SK-N-SH (cell line): ENCODE measurements at regions of chr5 and their contacts with region 1.

Region 1: DNA sequence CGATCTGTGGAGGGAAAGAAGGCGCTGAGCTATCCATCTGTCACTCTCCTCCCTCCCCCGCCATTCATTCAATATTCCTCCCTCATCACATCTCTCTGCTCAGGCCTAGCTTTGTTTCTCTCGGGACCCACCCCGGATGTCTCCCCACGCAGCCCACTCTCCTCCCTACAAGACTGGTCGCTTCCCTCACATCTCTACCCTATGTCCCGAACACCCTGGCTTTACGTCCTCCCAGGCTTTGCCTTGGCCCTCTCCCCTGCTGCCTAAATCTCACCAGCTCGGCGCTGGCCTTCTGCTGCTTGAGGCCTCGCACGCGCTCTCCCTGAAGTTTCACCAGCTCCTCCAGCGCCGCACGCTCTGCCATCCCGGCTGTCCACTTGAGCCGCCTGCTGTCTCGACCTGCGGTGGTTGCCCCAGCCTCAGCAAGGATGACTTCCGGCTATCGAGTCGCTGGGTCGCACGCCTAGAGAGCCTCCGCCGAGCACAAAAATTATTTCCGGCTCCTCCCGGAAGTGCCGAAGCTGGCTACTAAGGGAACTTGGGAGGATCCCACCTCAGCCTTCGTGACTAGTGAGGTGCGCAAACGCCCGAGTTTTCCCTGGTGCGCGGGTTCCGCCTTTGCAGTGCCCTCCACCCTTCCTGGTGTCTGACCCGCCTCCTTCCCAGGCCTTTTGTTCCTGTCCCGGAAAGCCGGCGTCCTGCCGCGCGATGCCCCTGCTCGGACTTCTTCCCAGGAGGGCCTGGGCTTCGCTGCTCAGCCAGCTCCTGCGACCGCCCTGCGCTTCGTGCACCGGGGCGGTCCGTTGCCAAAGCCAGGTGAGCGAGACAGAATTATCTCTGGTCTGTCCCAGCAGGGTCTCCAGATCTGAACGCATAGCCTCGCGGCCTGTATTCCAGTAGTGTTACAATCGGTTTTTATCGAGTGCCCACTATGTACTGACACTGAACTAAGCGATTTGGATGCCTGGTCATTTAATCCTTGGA is at the starts of genes HARS1 and HARS2:
- DNase-seq: peak; percentile 92
- H3K4me3 ChIP-seq: peak within 1 kb of the TSS; percentile 87
- H3K27ac ChIP-seq: peak within 1 kb of the TSS; percentile 86 to 88
- H3K4me1 ChIP-seq: peaks cover 0 to 12% of the 10 kb centered on the region in 2 experiments; a peak in 3 of 4 replicates
- H3K27me3 ChIP-seq: no peaks in the 10 kb centered on the region
- CTCF ChIP-seq: no peak
- EP300 ChIP-seq: peak in 1 of 2 experiments; percentile 22; a peak in 1 of 4 replicates
- RAD21 ChIP-seq: no peak
- polyA plus RNA-seq, gene HARS1: 124 and 135 TPM in 2 replicates
- polyA plus RNA-seq, gene HARS2: 40.8 and 54.5 TPM in 2 replicates

Region 2: GRCh38 chr5:140401362-140402257 is 289.6 kb before region 1 on chr5 and contains the start of gene ANKHD1:
- CTCF ChIA-PET with region 1: no interaction called
- POLR2A ChIA-PET with region 1: no interaction called
- DNase-seq: peak; percentile 91
- H3K4me3 ChIP-seq: peak within 1 kb of the TSS; percentile 85 to 98
- H3K27ac ChIP-seq: peak within 1 kb of the TSS; percentile 88 to 95
- H3K4me1 ChIP-seq: peaks cover 0 to 4% of the 10 kb centered on the region in 2 experiments; a peak in 1 of 4 replicates
- H3K27me3 ChIP-seq: no peaks in the 10 kb centered on the region
- CTCF ChIP-seq: no peak
- EP300 ChIP-seq: no peak
- RAD21 ChIP-seq: no peak
- polyA plus RNA-seq, gene ANKHD1: 26.7 and 36.4 TPM in 2 replicates

Region 3: GRCh38 chr5:140664359-140665119 is 26.7 kb before region 1 on chr5 and contains the start of gene WDR55:
- CTCF ChIA-PET with region 1: interaction called, 4 read pairs
- POLR2A ChIA-PET with region 1: interaction called, 13 read pairs
- DNase-seq: peak; percentile 96
- H3K4me3 ChIP-seq: peak within 1 kb of the TSS; percentile 78 to 88
- H3K27ac ChIP-seq: peak within 1 kb of the TSS; percentile 89 to 94
- H3K4me1 ChIP-seq: peaks cover 0 to 4% of the 10 kb centered on the region in 2 experiments; a peak in 2 of 4 replicates
- H3K27me3 ChIP-seq: no peaks in the 10 kb centered on the region
- CTCF ChIP-seq: no peak
- EP300 ChIP-seq: no peak
- RAD21 ChIP-seq: no peak
- polyA plus RNA-seq, gene WDR55: 28.3 and 32.7 TPM in 2 replicates

Region 4: GRCh38 chr5:140673187-140673976 is 17.9 kb before region 1 on chr5 and contains the start of gene DND1:
- CTCF ChIA-PET with region 1: interaction called, 5 read pairs
- POLR2A ChIA-PET with region 1: interaction called, 11 read pairs
- DNase-seq: peak; percentile 55
- H3K4me3 ChIP-seq: no peak within 1 kb of the TSS
- H3K27ac ChIP-seq: no peak within 1 kb of the TSS; a peak in 1 of 4 replicates
- H3K4me1 ChIP-seq: no peaks in the 10 kb centered on the region
- H3K27me3 ChIP-seq: no peaks in the 10 kb centered on the region
- CTCF ChIP-seq: no peak
- EP300 ChIP-seq: no peak
- RAD21 ChIP-seq: no peak
- polyA plus RNA-seq, gene DND1: 1.2 and 2.1 TPM in 2 replicates